AG04450 (cell line): ENCODE measurements at regions of chr2 and their contacts with region 1.

Region 1: DNA sequence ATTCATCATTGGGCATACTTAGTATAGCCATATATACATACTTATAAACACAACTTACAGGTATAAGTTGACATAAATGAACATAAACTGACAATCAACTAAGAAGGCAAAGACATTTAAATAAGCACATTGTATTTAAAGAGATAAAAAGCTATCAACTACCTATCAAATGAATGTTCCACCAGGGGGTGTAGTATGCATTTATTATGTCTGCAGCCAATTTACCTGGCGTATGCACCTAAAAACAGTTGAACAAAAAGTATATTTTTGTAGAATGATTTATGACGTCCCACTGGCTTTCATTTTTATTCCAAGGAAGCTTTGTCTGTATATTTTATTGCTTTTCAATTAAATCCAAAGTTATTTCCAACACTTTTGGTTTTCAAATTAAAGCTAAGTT is 323.5 kb downstream of the AFF3 start:
- DNase-seq: no peak
- H3K4me3 ChIP-seq: no peak overlapping the region
- H3K27ac ChIP-seq: no peak overlapping the region
- H3K27me3 ChIP-seq: no peaks in the 10 kb centered on the region
- CTCF ChIP-seq: peak; percentile 32; the same call in 1 of the 2 replicates

Region 2: GRCh38 chr2:99615247-99615771 is 203.5 kb before region 1 on chr2:
- CTCF ChIA-PET with region 1: no interaction called
- POLR2A ChIA-PET with region 1: no interaction called
- DNase-seq: no peak
- H3K4me3 ChIP-seq: no peak overlapping the region
- H3K27ac ChIP-seq: no peak overlapping the region
- H3K27me3 ChIP-seq: no peaks in the 10 kb centered on the region
- CTCF ChIP-seq: no peak

Region 3: DNA sequence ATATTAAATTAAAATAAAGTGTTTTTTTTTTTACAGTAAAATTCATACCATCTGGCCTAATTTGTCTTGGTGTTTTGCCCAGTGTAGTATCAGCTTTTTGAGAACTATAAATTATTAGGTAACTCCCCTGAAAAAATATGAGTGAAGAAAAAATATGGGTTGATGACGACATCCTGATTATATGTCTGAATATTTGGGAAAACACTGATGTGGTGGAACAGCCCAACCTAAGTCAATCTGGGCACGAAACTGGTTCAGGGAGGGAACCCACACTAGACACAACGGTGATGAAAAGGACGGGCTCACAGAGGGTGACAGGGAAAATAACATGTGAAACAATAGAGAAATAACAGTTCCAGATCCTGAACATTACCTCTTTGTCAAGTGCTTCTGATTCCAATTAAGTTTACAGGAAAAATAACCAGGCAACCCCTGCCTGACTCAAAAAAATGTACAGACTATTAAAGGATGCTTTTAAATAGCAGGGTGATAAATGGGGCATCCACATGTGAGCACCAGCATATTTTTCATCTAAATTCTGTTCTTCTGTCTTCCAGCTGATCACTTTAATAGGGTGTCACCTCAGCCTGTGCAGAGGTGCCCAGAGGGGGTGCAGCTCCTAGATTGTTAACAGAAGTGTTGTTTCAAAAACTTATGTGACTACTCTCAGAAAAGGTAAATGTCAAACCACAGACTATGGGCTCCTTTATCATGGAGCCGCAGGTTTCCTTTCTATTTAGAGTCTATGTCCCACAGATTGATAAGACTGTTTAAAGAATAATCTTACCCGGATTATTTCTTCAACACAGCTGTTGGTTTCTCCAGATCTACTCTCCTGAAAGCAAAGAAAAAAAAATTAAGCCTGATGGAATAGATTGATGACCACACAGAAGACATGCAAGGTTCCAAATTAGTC is 18.1 kb after region 1 on chr2:
- CTCF ChIA-PET with region 1: no interaction called
- POLR2A ChIA-PET with region 1: no interaction called
- DNase-seq: no peak
- H3K4me3 ChIP-seq: no peak overlapping the region
- H3K27ac ChIP-seq: no peak overlapping the region
- H3K27me3 ChIP-seq: no peaks in the 10 kb centered on the region
- CTCF ChIP-seq: no peak

Region 4: DNA sequence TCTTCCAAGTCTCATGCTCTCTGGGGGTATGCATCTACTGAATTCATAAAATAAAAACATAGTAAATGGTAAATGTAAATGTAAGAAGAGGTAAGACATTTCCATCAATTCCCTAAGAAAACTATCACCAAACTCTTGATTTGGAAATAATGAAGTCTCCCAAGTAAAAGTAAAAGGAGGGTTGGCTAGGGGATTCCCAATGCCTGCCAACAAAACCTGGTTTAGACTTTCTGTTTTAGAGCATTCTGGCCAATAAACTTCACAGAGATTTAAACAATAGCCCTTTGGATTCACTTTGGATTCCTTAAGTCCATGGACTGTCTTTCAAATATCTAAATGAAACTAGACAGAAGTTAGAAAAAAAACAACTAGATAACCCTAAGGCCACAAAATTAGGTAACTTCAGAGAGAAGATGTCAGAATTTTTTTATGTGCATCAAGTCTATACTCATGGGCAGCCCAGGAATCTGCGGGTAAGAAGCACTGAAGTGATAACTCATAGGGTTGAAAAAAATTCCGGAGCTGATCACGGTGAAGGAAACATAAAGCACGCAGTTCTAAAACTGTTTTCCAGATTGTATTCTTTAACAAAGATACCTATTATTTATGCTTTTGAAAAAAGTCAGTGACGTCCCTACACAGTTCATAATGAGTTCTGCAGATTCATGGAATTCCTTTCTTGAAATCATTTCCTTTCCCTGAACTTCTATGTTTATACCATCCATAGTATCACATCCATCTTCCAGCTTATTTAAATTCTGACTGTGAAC is 59.9 kb after region 1 on chr2:
- CTCF ChIA-PET with region 1: interaction called, 11 read pairs
- POLR2A ChIA-PET with region 1: no interaction called
- DNase-seq: peak; percentile 83
- H3K4me3 ChIP-seq: no peak overlapping the region
- H3K27ac ChIP-seq: peak overlapping the region; percentile 90
- H3K27me3 ChIP-seq: no peaks in the 10 kb centered on the region
- CTCF ChIP-seq: no peak